ENCODE measurements at regions of chr9 and their contacts with region 1.

Region 1: GRCh38 chr9:91045041-91045440 is 243.4 kb downstream of the SYK start:
- DNase-seq: no peak
- ATAC-seq: no peak
- H3K4me3 ChIP-seq: no peak overlapping the region
- H3K27ac ChIP-seq: no peak overlapping the region
- H3K4me1 ChIP-seq: peaks cover 0 to 8% (median 0%) of the 10 kb centered on the region in 12 donors
- H3K27me3 ChIP-seq: peaks cover 0 to 12% (median 0%) of the 10 kb centered on the region in 9 donors
- CTCF ChIP-seq: no peak
- POLR2A ChIP-seq: no peak

Region 2: GRCh38 chr9:90991953-90992352 is 53.1 kb before region 1 on chr9:
- intact Hi-C with region 1: no loop called
- DNase-seq: no peak
- ATAC-seq: no peak
- H3K4me3 ChIP-seq: no peak overlapping the region
- H3K27ac ChIP-seq: no peak overlapping the region
- H3K4me1 ChIP-seq: no peaks in the 10 kb centered on the region
- H3K27me3 ChIP-seq: no peaks in the 10 kb centered on the region
- CTCF ChIP-seq: no peak
- POLR2A ChIP-seq: no peak

Region 3: GRCh38 chr9:91075279-91075678 is 30.2 kb after region 1 on chr9:
- intact Hi-C with region 1: loop called in 1 of 10 experiments (anchors 2 kb)
- DNase-seq: no peak
- ATAC-seq: no peak
- H3K4me3 ChIP-seq: no peak overlapping the region
- H3K27ac ChIP-seq: no peak overlapping the region
- H3K4me1 ChIP-seq: peaks cover 0 to 22% (median 0%) of the 10 kb centered on the region in 12 donors
- H3K27me3 ChIP-seq: no peaks in the 10 kb centered on the region
- CTCF ChIP-seq: no peak
- POLR2A ChIP-seq: no peak

Measured in heart left ventricle (tissue), 16 donors.